ENCODE measurements at regions of chr6 and their contacts with region 1.

Region 1: DNA sequence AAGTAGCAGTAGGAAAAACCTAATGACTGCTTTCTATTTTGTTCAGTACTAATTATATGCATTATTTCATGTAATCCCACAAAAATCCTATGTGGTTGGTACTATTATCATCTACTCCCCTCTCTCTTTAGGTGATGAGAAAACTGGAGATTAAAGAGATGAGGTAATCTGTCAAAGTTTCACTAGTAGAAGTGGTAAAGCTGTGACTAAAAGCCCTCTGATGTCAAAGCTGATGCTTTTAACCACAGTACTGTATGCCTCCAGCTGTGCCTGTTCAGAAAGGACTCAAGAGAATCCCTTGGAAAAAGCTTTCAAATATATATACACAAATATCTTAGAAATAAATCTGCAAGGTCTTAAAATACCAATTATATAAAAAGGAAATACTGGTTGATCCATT is 38.0 kb downstream of the PHIP start:
- DNase-seq: no peak
- H3K4me3 Mint-ChIP-seq: no peak overlapping the region
- H3K27ac Mint-ChIP-seq: no peak overlapping the region
- H3K4me1 Mint-ChIP-seq: peaks cover 46% of the 10 kb centered on the region
- H3K27me3 Mint-ChIP-seq: no peaks in the 10 kb centered on the region

Region 2: DNA sequence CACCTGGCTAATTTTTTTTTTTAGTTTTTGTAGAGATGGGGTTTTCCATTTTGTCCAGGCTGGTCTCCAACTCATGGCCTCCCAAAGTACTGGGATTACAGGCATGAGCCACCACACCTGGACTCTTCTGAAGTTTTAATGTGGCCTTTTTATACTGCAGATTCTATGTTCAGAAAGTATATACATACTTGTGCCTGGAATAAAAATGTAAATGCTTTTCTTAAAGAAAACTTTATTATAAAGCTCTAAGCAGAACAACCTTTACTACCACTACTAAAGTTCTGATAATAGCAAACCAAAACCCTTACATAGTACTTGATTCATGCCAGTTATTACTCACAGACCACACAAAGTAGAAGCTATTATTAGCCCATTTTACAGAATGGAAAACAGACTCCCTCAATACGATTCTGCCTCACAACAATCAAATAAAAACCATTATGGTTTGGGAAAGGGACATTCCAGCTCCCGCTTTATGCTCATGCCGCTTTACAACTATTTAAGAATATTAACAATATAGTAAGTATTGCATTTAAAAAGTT is 32.6 kb after region 1 on chr6:
- intact Hi-C with region 1: loop called (anchors 2 kb)
- DNase-seq: no peak
- H3K4me3 Mint-ChIP-seq: no peak overlapping the region
- H3K27ac Mint-ChIP-seq: no peak overlapping the region
- H3K4me1 Mint-ChIP-seq: peaks cover 40% of the 10 kb centered on the region
- H3K27me3 Mint-ChIP-seq: no peaks in the 10 kb centered on the region

Measured in activated T-helper 2 cell treated with anti-CD3 and anti-CD28 coated beads, Interferon-gamma antibody, Interleukin-2, Interleukin-4, amounts not matched to agents 10 μg/mL and 5 μg/mL and 100 μg/mL, durations not matched to agents 14 hours and 24 hours and 36 hours (primary cell).